GM10248 (cell line): ENCODE measurements at regions of chr15 and their contacts with region 1.

Region 1: GRCh38 chr15:85402195-85402881 is 21.9 kb downstream of the AKAP13 start:
- DNase-seq: no peak
- CTCF ChIP-seq: no peak

Region 2: DNA sequence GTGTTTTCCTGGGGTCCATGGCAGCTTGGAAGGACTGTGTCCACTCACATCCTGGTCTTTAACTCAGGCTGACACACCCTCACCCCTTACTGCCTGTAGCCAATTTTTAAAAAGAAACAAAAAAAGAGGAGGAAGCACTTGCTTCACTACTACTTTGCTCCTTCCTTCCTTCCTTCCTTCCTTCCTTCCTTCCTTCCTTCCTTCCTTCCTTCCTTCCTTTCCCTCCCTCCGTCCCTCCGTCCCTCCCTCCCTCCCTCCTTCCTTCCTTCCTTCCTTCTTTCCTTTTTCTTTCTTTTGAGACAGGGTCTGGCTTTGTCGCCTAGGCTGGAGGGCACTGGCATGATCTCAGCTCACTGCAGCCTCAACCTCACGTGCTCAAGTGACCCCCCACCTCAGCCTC is 47.4 kb before region 1 on chr15:
- CTCF ChIA-PET with region 1: no interaction called
- POLR2A ChIA-PET with region 1: no interaction called
- DNase-seq: no peak
- CTCF ChIP-seq: no peak

Region 3: GRCh38 chr15:85388566-85389305 is 13.6 kb before region 1 on chr15:
- CTCF ChIA-PET with region 1: interaction called, 18 read pairs
- POLR2A ChIA-PET with region 1: no interaction called
- DNase-seq: no peak
- CTCF ChIP-seq: no peak